ENCODE measurements at regions of chr5 and their contacts with region 1.

Region 1: GRCh38 chr5:39675676-39676075 is 250.9 kb upstream of the DAB2 start:
- DNase-seq: no peak
- ATAC-seq: no peak
- H3K4me3 ChIP-seq: no peak overlapping the region
- H3K27ac ChIP-seq: no peak overlapping the region
- H3K4me1 ChIP-seq: peaks cover 38% of the 10 kb centered on the region
- H3K27me3 ChIP-seq: no peaks in the 10 kb centered on the region
- CTCF ChIP-seq: no peak

Region 2: DNA sequence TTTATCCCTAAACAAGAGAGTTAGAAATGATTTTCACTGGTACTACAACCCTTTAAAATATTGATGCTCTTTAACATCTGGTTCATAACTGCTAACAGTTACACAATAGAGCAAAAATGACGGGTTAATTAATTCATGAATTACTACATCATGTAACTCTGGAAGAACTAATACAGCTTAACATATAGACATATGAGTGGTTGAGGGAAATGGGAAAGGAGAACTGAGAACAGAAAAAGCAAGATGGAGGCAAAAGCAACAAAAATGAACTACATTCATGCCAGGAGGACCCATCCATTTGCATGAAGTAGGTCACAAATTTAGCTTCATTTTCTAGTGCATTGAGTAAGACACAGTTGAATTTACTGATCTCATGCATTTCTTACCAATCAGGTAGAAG is 373.2 kb before region 1 on chr5:
- CTCF ChIA-PET with region 1: no interaction called
- POLR2A ChIA-PET with region 1: no interaction called
- intact Hi-C with region 1: no loop called
- DNase-seq: no peak
- ATAC-seq: no peak
- H3K4me3 ChIP-seq: no peak overlapping the region
- H3K27ac ChIP-seq: no peak overlapping the region
- H3K4me1 ChIP-seq: no peaks in the 10 kb centered on the region
- H3K27me3 ChIP-seq: no peaks in the 10 kb centered on the region
- CTCF ChIP-seq: no peak

Region 3: DNA sequence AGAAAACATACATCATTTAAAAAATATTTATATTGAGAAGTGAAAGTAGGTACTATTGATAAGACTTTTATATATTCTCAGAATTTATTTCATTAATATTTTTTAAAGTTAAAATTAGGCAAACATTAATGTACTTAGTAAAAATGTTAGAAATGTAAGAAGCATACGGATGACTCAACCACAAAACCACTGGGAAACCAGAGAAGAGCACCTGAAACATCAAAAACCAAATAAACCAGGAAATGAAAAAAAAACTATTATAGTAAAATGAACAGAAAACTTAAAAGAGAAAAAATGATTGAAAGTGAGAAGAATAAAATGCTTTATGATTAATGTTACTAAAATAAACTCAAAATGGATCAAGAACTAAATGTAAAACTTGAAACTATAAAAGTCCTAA is 17.7 kb before region 1 on chr5:
- CTCF ChIA-PET with region 1: no interaction called
- POLR2A ChIA-PET with region 1: no interaction called
- intact Hi-C with region 1: loop called (anchors 2 kb)
- DNase-seq: peak; percentile 51
- ATAC-seq: peak; percentile 53; the same call in 1 of the 2 replicates
- H3K4me3 ChIP-seq: no peak overlapping the region
- H3K27ac ChIP-seq: peak overlapping the region; percentile 15; the same call in 1 of the 2 replicates
- H3K4me1 ChIP-seq: peaks cover 40% of the 10 kb centered on the region
- H3K27me3 ChIP-seq: no peaks in the 10 kb centered on the region
- CTCF ChIP-seq: no peak